PC-9 (cell line): ENCODE measurements at regions of chr15 and their contacts with region 1.

Region 1: GRCh38 chr15:60195611-60196010 is 191.5 kb downstream of the FOXB1 start:
- DNase-seq: no peak
- H3K4me3 ChIP-seq: no peak overlapping the region
- H3K27ac ChIP-seq: no peak overlapping the region
- H3K4me1 ChIP-seq: no peaks in the 10 kb centered on the region
- H3K27me3 ChIP-seq: no peaks in the 10 kb centered on the region
- CTCF ChIP-seq: no peak

Region 2: GRCh38 chr15:59002418-59002859 is 1193.2 kb before region 1 on chr15:
- CTCF ChIA-PET with region 1: no interaction called
- POLR2A ChIA-PET with region 1: interaction called, 27 read pairs
- intact Hi-C with region 1: no loop called
- DNase-seq: no peak
- H3K4me3 ChIP-seq: no peak overlapping the region
- H3K27ac ChIP-seq: no peak overlapping the region
- H3K4me1 ChIP-seq: no peaks in the 10 kb centered on the region
- H3K27me3 ChIP-seq: no peaks in the 10 kb centered on the region
- CTCF ChIP-seq: no peak

Region 3: DNA sequence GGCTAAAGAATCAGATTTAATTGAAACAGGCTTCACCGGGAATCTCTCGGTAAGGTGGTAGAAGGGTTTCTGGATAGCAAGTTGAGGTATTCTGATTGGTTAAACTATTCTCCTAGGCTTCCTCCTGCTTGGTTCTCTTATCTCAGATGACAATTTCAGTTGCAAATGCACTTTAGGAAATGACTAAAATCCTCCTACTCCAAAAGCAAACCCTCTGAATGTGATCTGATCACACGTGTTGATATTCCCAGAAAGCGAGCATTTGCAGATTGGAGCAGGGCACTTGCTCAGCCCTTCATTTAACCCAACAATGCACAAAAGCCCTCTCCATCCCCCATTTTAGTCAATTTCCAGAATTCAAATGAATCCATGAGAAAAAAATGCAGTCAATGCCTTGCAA is 338.9 kb after region 1 on chr15:
- CTCF ChIA-PET with region 1: no interaction called
- POLR2A ChIA-PET with region 1: no interaction called
- intact Hi-C with region 1: loop called (anchors 5 kb)
- DNase-seq: no peak
- H3K4me3 ChIP-seq: no peak overlapping the region
- H3K27ac ChIP-seq: no peak overlapping the region
- H3K4me1 ChIP-seq: no peaks in the 10 kb centered on the region
- H3K27me3 ChIP-seq: no peaks in the 10 kb centered on the region
- CTCF ChIP-seq: no peak